Activated CD4-positive, alpha-beta memory T cell treated with anti-CD3 and anti-CD28 coated beads for 36 hours (primary cell): ENCODE measurements at regions of chr1 and their contacts with region 1.

Region 1: DNA sequence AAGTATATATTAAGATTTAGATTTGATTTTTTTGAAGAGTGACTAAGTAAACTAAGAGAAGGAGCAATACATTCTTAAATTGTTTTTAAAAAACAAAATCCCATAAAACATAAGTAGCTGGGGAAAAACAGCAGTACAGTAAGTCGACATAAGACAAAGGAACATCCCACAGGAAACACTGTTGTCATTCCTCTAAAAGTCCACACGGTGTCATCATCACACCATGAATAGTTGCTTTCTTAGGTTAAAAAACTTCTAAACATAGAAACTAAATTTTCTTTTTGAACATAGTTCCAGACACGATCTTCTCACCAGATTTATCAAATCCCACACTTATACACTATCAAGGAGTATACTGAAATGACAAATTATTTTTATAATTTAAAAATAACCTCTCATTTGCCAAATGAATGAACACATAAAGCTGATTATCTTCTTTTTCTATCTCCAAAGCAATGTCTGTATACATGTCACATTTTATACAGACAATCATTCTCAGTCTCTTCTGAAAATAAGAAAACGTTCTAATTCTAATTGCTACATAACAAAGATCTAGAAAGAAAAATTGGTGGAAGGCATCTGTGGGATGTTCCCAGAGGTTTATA is 15.8 kb downstream of the ODF2L start:
- DNase-seq: no peak
- H3K4me3 Mint-ChIP-seq: no peak overlapping the region
- H3K27ac Mint-ChIP-seq: no peak overlapping the region
- H3K4me1 Mint-ChIP-seq: peaks cover 9% of the 10 kb centered on the region
- H3K27me3 Mint-ChIP-seq: no peaks in the 10 kb centered on the region

Region 2: GRCh38 chr1:86395771-86396497 is 15.6 kb after region 1 on chr1 and contains the start of gene ODF2L:
- CTCF ChIA-PET with region 1: interaction called, 9 read pairs
- POLR2A ChIA-PET with region 1: no interaction called
- intact Hi-C with region 1: loop called (anchors 1 kb)
- DNase-seq: peak; percentile 94
- H3K4me3 Mint-ChIP-seq: peak within 1 kb of the TSS; percentile 97
- H3K27ac Mint-ChIP-seq: peak within 1 kb of the TSS; percentile 92
- H3K4me1 Mint-ChIP-seq: peaks cover 48% of the 10 kb centered on the region
- H3K27me3 Mint-ChIP-seq: no peaks in the 10 kb centered on the region
- total RNA-seq, gene ODF2L: 31.5 to 32.3 TPM

Region 3: DNA sequence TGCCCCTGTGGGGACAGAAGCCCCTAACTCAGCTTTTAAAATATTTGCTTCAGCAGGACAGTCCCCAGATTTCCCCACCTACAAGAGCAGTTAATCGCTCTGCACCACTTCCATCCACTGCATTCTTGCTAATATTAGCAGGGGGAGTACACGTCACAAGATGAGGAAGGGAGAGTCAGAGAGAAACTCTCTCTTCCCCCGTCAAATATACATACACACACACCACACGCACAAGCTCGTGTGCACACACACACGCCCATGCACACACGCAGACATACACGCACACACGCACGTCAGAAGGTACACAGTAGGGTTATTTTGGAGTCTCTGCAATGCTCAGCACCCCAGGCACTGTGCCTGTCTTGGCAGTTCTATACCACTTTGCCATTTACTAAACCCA is 90.5 kb after region 1 on chr1:
- CTCF ChIA-PET with region 1: interaction called, 9 read pairs
- POLR2A ChIA-PET with region 1: no interaction called
- intact Hi-C with region 1: loop called (anchors 1 kb)
- DNase-seq: no peak
- H3K4me3 Mint-ChIP-seq: no peak overlapping the region
- H3K27ac Mint-ChIP-seq: no peak overlapping the region
- H3K4me1 Mint-ChIP-seq: no peaks in the 10 kb centered on the region
- H3K27me3 Mint-ChIP-seq: peaks cover 6% of the 10 kb centered on the region

Region 4: GRCh38 chr1:86507935-86508582 is 127.7 kb after region 1 on chr1:
- CTCF ChIA-PET with region 1: interaction called, 57 read pairs
- POLR2A ChIA-PET with region 1: no interaction called
- intact Hi-C with region 1: no loop called
- DNase-seq: no peak
- H3K4me3 Mint-ChIP-seq: no peak overlapping the region
- H3K27ac Mint-ChIP-seq: no peak overlapping the region
- H3K4me1 Mint-ChIP-seq: peaks cover 6% of the 10 kb centered on the region
- H3K27me3 Mint-ChIP-seq: peaks cover 13% of the 10 kb centered on the region

Region 5: GRCh38 chr1:87077959-87078639 is 697.7 kb after region 1 on chr1:
- CTCF ChIA-PET with region 1: no interaction called
- POLR2A ChIA-PET with region 1: no interaction called
- intact Hi-C with region 1: loop called (anchors 5 kb)
- DNase-seq: peak; percentile 12
- H3K4me3 Mint-ChIP-seq: no peak overlapping the region
- H3K27ac Mint-ChIP-seq: peak overlapping the region; percentile 47
- H3K4me1 Mint-ChIP-seq: peaks cover 18% of the 10 kb centered on the region
- H3K27me3 Mint-ChIP-seq: no peaks in the 10 kb centered on the region